ENCODE measurements at regions of chr6 and their contacts with region 1.

Region 1: DNA sequence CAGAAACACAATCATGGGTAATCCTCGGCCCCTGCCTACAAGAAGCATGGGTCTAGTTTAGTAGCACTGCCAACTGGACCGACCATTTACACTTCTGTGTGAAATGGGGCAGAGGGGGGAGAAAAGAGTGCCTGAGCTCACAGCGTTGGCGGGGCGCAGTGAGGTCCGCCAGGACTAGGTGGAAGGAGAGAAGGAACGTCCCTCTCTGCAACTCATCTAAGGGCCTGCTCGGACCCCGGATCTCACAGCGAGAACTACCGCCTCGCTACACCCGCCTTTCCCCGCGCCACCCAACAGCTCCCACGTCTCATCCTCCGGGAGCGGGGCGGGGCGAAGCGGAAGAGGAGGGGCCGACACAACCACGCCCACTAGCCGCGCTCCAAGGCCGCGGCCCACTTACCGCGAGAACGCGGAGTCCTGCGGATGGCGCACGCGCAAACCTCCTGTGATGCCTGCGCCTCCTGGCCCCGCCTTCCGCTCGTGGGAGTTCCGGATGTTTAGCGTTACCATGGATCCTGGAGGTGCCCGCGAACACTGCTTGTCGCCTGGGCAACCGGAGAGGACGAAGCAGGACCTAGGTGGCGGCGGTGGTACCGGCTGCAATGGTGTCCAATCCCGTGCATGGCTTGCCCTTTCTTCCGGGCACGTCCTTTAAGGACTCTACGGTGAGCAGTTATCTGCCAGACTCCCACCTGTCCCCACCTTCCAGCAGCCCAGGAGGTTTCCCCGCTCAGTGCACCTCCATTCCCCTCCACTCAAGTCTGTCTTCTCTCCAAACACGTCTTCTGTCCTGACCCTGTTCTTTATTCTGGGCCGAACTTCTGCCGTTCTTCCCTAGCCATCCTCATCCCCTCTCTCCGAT is at the start of gene EFHC1:
- DNase-seq: peak; percentile 92
- ATAC-seq: peak; percentile 93
- H3K4me3 ChIP-seq: peak within 1 kb of the TSS; percentile 83
- H3K27ac ChIP-seq: peak within 1 kb of the TSS; percentile 79
- H3K4me1 ChIP-seq: peaks cover 18% of the 10 kb centered on the region
- H3K27me3 ChIP-seq: no peaks in the 10 kb centered on the region
- CTCF ChIP-seq: no peak
- EP300 ChIP-seq: peak in 1 of 2 experiments; percentile 50; a peak in 1 of 4 replicates
- POLR2A ChIP-seq: peak; percentile 96
- RAD21 ChIP-seq: no peak
- polyA plus RNA-seq, gene EFHC1: 9.0 to 9.1 TPM

Region 2: DNA sequence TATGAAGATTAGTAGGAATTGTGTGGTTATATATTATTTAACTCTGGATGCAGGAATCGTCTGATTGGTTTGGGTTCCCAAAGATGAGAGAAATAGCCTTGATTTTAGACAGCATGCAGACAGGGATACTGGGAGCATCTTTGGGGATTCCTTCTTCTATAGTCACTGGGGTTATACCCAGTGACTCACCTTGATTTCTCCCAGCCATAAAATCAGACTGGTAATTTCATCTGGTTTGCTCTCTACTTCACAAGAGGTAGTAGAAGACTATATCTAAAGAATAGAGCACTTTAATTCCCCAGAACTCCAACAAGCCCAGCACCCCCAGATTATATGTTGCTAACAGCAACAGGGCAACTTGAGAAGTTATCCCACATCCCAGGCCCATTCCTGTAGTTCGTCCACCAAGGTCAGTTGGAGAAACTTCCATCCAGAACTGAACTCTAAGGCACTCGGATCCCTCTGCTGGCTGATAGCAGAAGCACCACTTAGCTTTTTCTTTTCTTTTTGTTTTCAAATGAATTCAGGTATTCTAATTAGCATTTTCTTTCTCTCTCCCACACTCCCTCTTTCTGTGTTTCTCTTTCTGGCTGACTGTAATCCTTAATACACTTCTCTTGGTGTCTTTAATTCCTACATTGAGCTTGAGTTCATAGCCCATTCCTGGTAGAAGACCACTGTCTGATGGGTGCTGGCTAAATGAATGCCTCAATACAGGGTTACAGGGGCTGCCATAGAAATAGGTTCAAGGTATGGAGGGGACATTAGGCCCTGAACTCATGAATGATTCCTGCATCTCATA is 20.3 kb before region 1 on chr6:
- CTCF ChIA-PET with region 1: interaction called, 21 read pairs
- POLR2A ChIA-PET with region 1: no interaction called
- RAD21 ChIA-PET with region 1: interaction called, 8 read pairs
- SMC1A ChIA-PET with region 1: interaction called, 22 read pairs
- in situ Hi-C with region 1: no loop called
- intact Hi-C with region 1: no loop called
- DNase-seq: no peak
- ATAC-seq: peak; percentile 50
- H3K4me3 ChIP-seq: no peak overlapping the region
- H3K27ac ChIP-seq: no peak overlapping the region
- H3K4me1 ChIP-seq: peaks cover 37% of the 10 kb centered on the region
- H3K27me3 ChIP-seq: no peaks in the 10 kb centered on the region
- CTCF ChIP-seq: peak; percentile 84 to 93 (median 90); a peak in 5 of 6 replicates
- EP300 ChIP-seq: no peak
- POLR2A ChIP-seq: no peak
- RAD21 ChIP-seq: peak; percentile 98

Region 3: GRCh38 chr6:52497652-52498408 is 77.8 kb after region 1 on chr6:
- CTCF ChIA-PET with region 1: interaction called, 83 read pairs
- POLR2A ChIA-PET with region 1: interaction called, 35 read pairs
- RAD21 ChIA-PET with region 1: interaction called, 124 read pairs
- SMC1A ChIA-PET with region 1: interaction called, 249 read pairs
- in situ Hi-C with region 1: loop called (anchors 5 kb)
- intact Hi-C with region 1: loop called (anchors 1 kb)
- DNase-seq: peak; percentile 95
- ATAC-seq: peak; percentile 87
- H3K4me3 ChIP-seq: peak overlapping the region; percentile 61
- H3K27ac ChIP-seq: peak overlapping the region; percentile 96
- H3K4me1 ChIP-seq: peaks cover 64% of the 10 kb centered on the region
- H3K27me3 ChIP-seq: no peaks in the 10 kb centered on the region
- CTCF ChIP-seq: no peak
- EP300 ChIP-seq: peak; percentile 94 to 95
- POLR2A ChIP-seq: no peak; the same call in 1 of the 2 replicates
- RAD21 ChIP-seq: no peak

Region 4: GRCh38 chr6:52590152-52590931 is 170.3 kb after region 1 on chr6:
- CTCF ChIA-PET with region 1: interaction called, 118 read pairs
- POLR2A ChIA-PET with region 1: interaction called, 4 read pairs
- RAD21 ChIA-PET with region 1: interaction called, 8 read pairs
- SMC1A ChIA-PET with region 1: interaction called, 41 read pairs
- in situ Hi-C with region 1: no loop called
- intact Hi-C with region 1: no loop called
- DNase-seq: no peak
- ATAC-seq: peak; percentile 35; the same call in 1 of the 3 replicates
- H3K4me3 ChIP-seq: no peak overlapping the region
- H3K27ac ChIP-seq: no peak overlapping the region
- H3K4me1 ChIP-seq: peaks cover 14% of the 10 kb centered on the region
- H3K27me3 ChIP-seq: no peaks in the 10 kb centered on the region
- CTCF ChIP-seq: peak in 1 of 3 experiments; percentile 35; a peak in 2 of 6 replicates
- EP300 ChIP-seq: no peak
- POLR2A ChIP-seq: no peak
- RAD21 ChIP-seq: peak; percentile 52

Region 5: DNA sequence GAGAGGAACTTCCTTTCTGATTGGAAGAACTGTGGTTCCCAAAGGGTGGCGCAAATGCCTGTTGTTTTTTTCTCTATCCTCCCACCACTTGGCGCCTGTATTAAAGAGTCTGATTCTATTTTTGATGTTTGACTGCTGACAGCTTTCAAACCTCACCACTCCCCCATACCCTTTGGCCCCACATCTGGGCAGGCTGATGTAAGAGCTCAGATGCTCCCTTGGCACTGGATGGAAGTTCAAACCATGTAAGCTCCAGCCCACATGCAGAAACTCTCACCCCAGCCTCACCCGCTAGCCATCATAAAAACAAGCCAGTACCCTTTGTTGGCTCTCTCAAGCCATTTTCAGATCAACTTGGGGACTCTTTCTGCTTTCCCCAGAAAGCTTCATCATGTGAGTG is 230.9 kb after region 1 on chr6:
- CTCF ChIA-PET with region 1: interaction called, 49 read pairs
- POLR2A ChIA-PET with region 1: no interaction called
- RAD21 ChIA-PET with region 1: interaction called, 30 read pairs
- SMC1A ChIA-PET with region 1: interaction called, 63 read pairs
- in situ Hi-C with region 1: no loop called
- intact Hi-C with region 1: no loop called
- DNase-seq: no peak
- ATAC-seq: no peak
- H3K4me3 ChIP-seq: no peak overlapping the region
- H3K27ac ChIP-seq: no peak overlapping the region
- H3K4me1 ChIP-seq: no peaks in the 10 kb centered on the region
- H3K27me3 ChIP-seq: no peaks in the 10 kb centered on the region; a peak in 1 of 4 replicates
- CTCF ChIP-seq: no peak
- EP300 ChIP-seq: no peak
- POLR2A ChIP-seq: no peak
- RAD21 ChIP-seq: no peak

Region 6: GRCh38 chr6:52893803-52894649 is 474.0 kb after region 1 on chr6:
- CTCF ChIA-PET with region 1: no interaction called
- POLR2A ChIA-PET with region 1: no interaction called
- RAD21 ChIA-PET with region 1: no interaction called
- SMC1A ChIA-PET with region 1: no interaction called
- in situ Hi-C with region 1: no loop called
- intact Hi-C with region 1: no loop called
- DNase-seq: no peak
- ATAC-seq: no peak
- H3K4me3 ChIP-seq: no peak overlapping the region
- H3K27ac ChIP-seq: no peak overlapping the region
- H3K4me1 ChIP-seq: no peaks in the 10 kb centered on the region
- H3K27me3 ChIP-seq: no peaks in the 10 kb centered on the region
- CTCF ChIP-seq: no peak
- EP300 ChIP-seq: no peak
- POLR2A ChIP-seq: no peak
- RAD21 ChIP-seq: no peak